Activated CD4-positive, alpha-beta T cell treated with anti-CD3 and anti-CD28 coated beads, Interleukin-2, amount 10 ng/mL, durations not matched to agents 24 days and 14 days (primary cell): ENCODE measurements at regions of chr16 and their contacts with region 1.

Region 1: DNA sequence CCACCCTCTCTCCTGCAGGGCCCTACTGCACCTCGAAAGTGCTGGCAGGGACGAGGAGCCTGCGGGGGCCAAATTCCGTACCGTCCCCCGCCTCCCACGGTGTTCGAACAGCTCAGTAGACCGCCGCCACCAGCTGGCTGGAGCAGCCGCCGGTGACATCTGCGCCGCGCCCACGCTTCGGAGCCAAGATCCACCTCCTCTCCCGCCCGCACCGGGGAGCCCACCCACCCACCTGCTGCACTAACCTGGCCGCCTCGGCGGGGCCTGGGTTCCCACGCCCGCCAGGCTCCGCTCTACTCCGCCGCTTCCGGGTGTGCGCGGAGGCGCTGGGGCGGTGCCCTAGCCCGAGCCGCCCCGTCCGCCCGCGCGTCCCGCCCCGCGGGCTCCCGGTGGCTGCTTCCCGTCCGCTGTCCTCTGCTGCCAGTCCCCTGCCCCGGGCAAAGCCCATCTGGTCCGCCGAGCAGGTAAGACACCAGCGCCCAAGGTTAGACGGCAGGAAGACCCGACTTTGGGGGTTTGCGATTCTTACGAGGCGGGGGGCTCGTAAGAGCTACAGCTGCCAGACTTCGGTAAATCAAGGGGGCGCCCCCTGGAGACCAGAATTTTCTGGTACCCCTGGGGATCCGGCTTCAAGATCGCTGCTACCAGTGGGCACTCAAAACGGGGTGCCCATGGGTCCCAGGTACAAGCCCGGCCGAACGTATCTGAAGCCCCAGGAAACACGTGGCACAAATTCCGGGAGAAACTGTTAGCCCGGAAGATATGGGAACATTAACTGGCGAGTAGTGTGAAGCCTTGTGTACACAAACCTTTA is at the starts of genes FBXL8 and TRADD:
- DNase-seq: peak; percentile 96
- H3K4me3 Mint-ChIP-seq: peak within 1 kb of the TSS; percentile 92
- H3K27ac Mint-ChIP-seq: peak within 1 kb of the TSS; percentile 97
- H3K4me1 Mint-ChIP-seq: peaks cover 52% of the 10 kb centered on the region
- H3K27me3 Mint-ChIP-seq: no peaks in the 10 kb centered on the region
- total RNA-seq, gene FBXL8: 25.1 and 30.0 TPM in 2 replicates
- total RNA-seq, gene TRADD: 28.9 and 30.1 TPM in 2 replicates

Region 2: GRCh38 chr16:66207139-66207882 is 952.5 kb before region 1 on chr16:
- intact Hi-C with region 1: no loop called
- DNase-seq: no peak
- H3K4me3 Mint-ChIP-seq: no peak overlapping the region
- H3K27ac Mint-ChIP-seq: no peak overlapping the region
- H3K4me1 Mint-ChIP-seq: no peaks in the 10 kb centered on the region
- H3K27me3 Mint-ChIP-seq: no peaks in the 10 kb centered on the region

Region 3: GRCh38 chr16:66947302-66948065 is 212.3 kb before region 1 on chr16:
- intact Hi-C with region 1: loop called (anchors 5 kb)
- DNase-seq: peak; percentile 96
- H3K4me3 Mint-ChIP-seq: peak overlapping the region; percentile 89
- H3K27ac Mint-ChIP-seq: peak overlapping the region; percentile 23
- H3K4me1 Mint-ChIP-seq: peaks cover 18% of the 10 kb centered on the region
- H3K27me3 Mint-ChIP-seq: peaks cover 32% of the 10 kb centered on the region

Region 4: DNA sequence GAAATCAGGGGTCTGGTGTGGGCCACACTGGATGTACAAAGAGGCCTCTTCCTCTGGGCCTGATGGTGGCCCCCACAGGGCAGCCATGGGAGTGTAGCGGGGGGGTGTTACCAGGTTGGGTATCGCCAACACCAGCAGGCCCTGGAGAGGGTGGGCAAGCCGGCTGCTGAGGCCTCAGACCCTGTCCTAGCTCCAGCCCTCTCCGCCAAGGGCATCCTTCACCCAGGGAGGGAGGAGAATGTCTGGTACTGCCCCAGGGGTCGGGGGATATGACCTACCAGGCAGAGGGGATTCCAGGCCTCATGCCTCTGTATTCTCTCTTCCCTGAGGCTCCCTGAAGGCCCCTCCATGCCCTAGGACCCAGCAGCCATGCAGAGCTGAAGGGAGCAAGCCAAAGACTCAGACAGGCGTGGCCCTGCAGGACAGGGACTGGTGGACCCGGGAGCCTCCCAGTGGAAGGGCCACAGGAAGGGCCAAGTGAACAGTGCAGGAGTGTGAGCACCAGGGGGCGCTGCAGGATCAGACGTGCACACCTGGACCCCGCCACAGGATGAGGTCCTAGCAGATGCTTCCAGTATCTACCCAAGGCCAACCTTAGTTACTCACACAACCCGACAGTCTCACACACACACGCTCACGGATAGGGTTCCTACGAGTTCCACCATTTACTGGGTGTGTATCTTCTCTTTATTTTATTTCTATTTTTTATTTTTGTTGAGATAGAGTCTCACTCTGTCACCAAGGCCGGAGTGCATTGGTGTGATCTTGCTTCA is 182.3 kb before region 1 on chr16:
- intact Hi-C with region 1: loop called (anchors 1 kb)
- DNase-seq: peak; percentile 97
- H3K4me3 Mint-ChIP-seq: peak overlapping the region; percentile 22
- H3K27ac Mint-ChIP-seq: peak overlapping the region; percentile 85
- H3K4me1 Mint-ChIP-seq: peaks cover 49% of the 10 kb centered on the region
- H3K27me3 Mint-ChIP-seq: no peaks in the 10 kb centered on the region

Region 5: GRCh38 chr16:66984892-66985311 is 174.9 kb before region 1 on chr16:
- intact Hi-C with region 1: loop called (anchors 1 kb)
- DNase-seq: peak; percentile 86
- H3K4me3 Mint-ChIP-seq: peak overlapping the region; percentile 61
- H3K27ac Mint-ChIP-seq: peak overlapping the region; percentile 97
- H3K4me1 Mint-ChIP-seq: peaks cover 57% of the 10 kb centered on the region
- H3K27me3 Mint-ChIP-seq: no peaks in the 10 kb centered on the region

Region 6: GRCh38 chr16:67109407-67110135 is 50.2 kb before region 1 on chr16 and contains the start of gene PHAF1:
- intact Hi-C with region 1: loop called (anchors 5 kb)
- DNase-seq: peak; percentile 99
- H3K4me3 Mint-ChIP-seq: peak within 1 kb of the TSS; percentile 96
- H3K27ac Mint-ChIP-seq: peak within 1 kb of the TSS; percentile 82
- H3K4me1 Mint-ChIP-seq: peaks cover 30% of the 10 kb centered on the region
- H3K27me3 Mint-ChIP-seq: no peaks in the 10 kb centered on the region
- total RNA-seq, gene PHAF1: 19.4 and 19.8 TPM in 2 replicates

Region 7: GRCh38 chr16:67129422-67129821 is 30.4 kb before region 1 on chr16:
- intact Hi-C with region 1: no loop called
- DNase-seq: no peak
- H3K4me3 Mint-ChIP-seq: no peak overlapping the region
- H3K27ac Mint-ChIP-seq: no peak overlapping the region
- H3K4me1 Mint-ChIP-seq: peaks cover 4% of the 10 kb centered on the region
- H3K27me3 Mint-ChIP-seq: no peaks in the 10 kb centered on the region

Region 8: GRCh38 chr16:67173808-67174705 is 14.3 kb after region 1 on chr16:
- intact Hi-C with region 1: loop called (anchors 1 kb)
- DNase-seq: peak; percentile 94
- H3K4me3 Mint-ChIP-seq: peak overlapping the region; percentile 94
- H3K27ac Mint-ChIP-seq: peak overlapping the region; percentile 88
- H3K4me1 Mint-ChIP-seq: peaks cover 62% of the 10 kb centered on the region
- H3K27me3 Mint-ChIP-seq: no peaks in the 10 kb centered on the region

Region 9: DNA sequence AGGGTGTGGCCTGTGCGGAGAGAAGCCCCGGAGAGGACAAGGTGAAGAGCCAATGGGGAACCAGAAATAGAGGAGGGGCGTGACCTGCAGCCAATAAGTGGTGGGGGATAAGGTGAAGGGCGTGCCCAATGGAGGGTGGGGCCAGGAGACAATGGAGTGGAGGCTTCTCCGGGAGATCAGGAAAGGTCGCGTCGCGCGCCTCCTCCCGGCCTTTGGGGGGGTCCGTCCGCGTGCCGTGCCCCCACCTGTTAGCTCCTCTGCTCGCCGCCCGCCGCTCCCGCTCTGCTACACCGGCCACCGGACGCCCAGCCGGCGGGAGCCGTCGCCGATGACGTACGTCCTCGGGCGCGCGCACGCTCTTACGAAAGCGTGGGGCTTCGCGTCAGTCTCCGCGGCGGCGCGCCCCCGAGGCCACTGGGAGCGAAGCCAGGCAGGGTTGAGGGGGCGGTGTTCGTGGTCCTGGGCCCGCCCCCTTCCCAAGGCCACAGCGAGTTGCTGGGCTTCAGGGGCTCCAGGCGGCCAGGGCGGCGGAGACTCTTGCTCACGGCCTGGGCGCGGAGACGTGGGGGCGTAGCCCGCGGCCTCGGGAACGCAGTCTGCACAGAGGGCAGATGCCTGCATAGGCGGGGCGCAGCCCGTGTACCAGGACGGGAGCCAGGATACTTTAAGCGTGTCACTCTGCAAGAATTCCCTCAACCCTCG is 24.0 kb after region 1 on chr16 and contains the start of gene MATCAP1:
- intact Hi-C with region 1: loop called (anchors 1 kb)
- DNase-seq: peak; percentile 98
- H3K4me3 Mint-ChIP-seq: no peak within 1 kb of the TSS
- H3K27ac Mint-ChIP-seq: peak within 1 kb of the TSS; percentile 45
- H3K4me1 Mint-ChIP-seq: peaks cover 19% of the 10 kb centered on the region
- H3K27me3 Mint-ChIP-seq: peaks cover 8% of the 10 kb centered on the region
- total RNA-seq, gene MATCAP1: 51.3 and 55.1 TPM in 2 replicates

Region 10: DNA sequence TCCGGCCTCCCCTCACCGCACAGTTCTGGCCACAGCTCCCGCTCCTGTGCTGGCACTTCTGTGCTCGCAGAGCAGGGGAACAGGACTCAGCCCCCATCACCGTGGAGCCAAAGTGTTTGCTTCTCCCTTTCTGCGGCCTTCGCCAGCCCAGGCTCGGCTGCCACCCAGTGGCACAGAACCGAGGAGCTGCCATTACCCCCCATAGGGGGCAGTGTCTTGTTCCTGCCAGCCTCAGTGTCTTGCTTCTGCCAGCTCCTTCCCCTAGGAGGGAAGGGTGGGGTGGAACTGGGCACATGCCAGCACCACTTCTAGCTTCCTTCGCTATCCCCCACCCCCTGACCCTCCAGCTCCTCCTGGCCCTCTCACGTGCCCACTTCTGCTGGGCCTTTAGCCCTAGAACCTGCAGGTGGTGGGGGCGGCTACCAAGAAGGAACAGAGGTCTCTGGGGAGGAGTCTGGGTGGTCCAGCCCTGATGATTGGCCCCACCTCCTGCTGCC is 38.5 kb after region 1 on chr16:
- intact Hi-C with region 1: no loop called
- DNase-seq: no peak
- H3K4me3 Mint-ChIP-seq: no peak overlapping the region
- H3K27ac Mint-ChIP-seq: no peak overlapping the region
- H3K4me1 Mint-ChIP-seq: peaks cover 20% of the 10 kb centered on the region
- H3K27me3 Mint-ChIP-seq: no peaks in the 10 kb centered on the region

Region 11: GRCh38 chr16:67391394-67392078 is 231.7 kb after region 1 on chr16:
- intact Hi-C with region 1: no loop called
- DNase-seq: no peak
- H3K4me3 Mint-ChIP-seq: no peak overlapping the region
- H3K27ac Mint-ChIP-seq: no peak overlapping the region
- H3K4me1 Mint-ChIP-seq: peaks cover 4% of the 10 kb centered on the region
- H3K27me3 Mint-ChIP-seq: peaks cover 50% of the 10 kb centered on the region